HepG2 (cell line): ENCODE measurements at regions of chr6 and their contacts with region 1.

Region 1: GRCh38 chr6:47034919-47035318 is 7.2 kb downstream of the ADGRF1 start:
- DNase-seq: no peak
- ATAC-seq: no peak
- H3K4me3 ChIP-seq: no peak overlapping the region
- H3K27ac ChIP-seq: no peak overlapping the region
- H3K4me1 ChIP-seq: no peaks in the 10 kb centered on the region
- H3K27me3 ChIP-seq: peaks cover 6 to 68% of the 10 kb centered on the region in 2 experiments; a peak in 4 of 5 replicates
- CTCF ChIP-seq: no peak
- EP300 ChIP-seq: no peak
- POLR2A ChIP-seq: no peak
- RAD21 ChIP-seq: no peak

Region 2: GRCh38 chr6:46756469-46757206 is 278.3 kb before region 1 on chr6:
- CTCF ChIA-PET with region 1: no interaction called
- POLR2A ChIA-PET with region 1: no interaction called
- in situ Hi-C with region 1: no loop called
- intact Hi-C with region 1: no loop called
- DNase-seq: no peak
- ATAC-seq: no peak
- H3K4me3 ChIP-seq: no peak overlapping the region
- H3K27ac ChIP-seq: no peak overlapping the region
- H3K4me1 ChIP-seq: no peaks in the 10 kb centered on the region
- H3K27me3 ChIP-seq: peaks cover 0 to 6% of the 10 kb centered on the region in 2 experiments; a peak in 1 of 5 replicates
- CTCF ChIP-seq: no peak
- EP300 ChIP-seq: no peak
- POLR2A ChIP-seq: no peak
- RAD21 ChIP-seq: no peak

Region 3: DNA sequence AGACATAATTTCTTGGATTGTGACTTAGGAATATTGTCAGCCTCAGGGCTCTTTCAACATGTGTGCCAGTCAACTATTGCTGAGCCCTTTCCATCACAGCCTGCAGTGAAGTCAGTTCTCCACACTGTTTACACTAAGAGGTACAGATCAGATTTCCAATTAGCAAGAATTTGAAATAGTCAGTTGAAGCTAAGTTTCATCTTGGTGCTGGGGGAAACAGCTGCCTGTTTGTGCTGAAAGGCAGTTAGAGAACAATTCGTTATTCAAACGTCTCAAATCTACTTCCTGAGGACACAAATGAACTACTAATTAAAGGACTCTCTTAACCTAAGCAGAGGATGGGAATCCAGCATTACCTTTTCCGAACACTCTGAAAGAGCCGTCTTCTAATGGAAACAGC is 18.7 kb before region 1 on chr6:
- CTCF ChIA-PET with region 1: no interaction called
- POLR2A ChIA-PET with region 1: no interaction called
- in situ Hi-C with region 1: no loop called
- intact Hi-C with region 1: loop called (anchors 1 kb)
- DNase-seq: no peak
- ATAC-seq: 0 out of 3 replicates have a peak, but pooled peaks have one; percentile 36
- H3K4me3 ChIP-seq: no peak overlapping the region
- H3K27ac ChIP-seq: no peak overlapping the region
- H3K4me1 ChIP-seq: peaks cover 10% of the 10 kb centered on the region
- H3K27me3 ChIP-seq: peaks cover 0 to 35% of the 10 kb centered on the region in 2 experiments; a peak in 2 of 5 replicates
- CTCF ChIP-seq: no peak
- EP300 ChIP-seq: no peak
- POLR2A ChIP-seq: no peak
- RAD21 ChIP-seq: no peak

Region 4: GRCh38 chr6:47103931-47104330 is 69.0 kb after region 1 on chr6:
- CTCF ChIA-PET with region 1: no interaction called
- POLR2A ChIA-PET with region 1: no interaction called
- in situ Hi-C with region 1: no loop called
- intact Hi-C with region 1: no loop called
- DNase-seq: no peak
- ATAC-seq: no peak
- H3K4me3 ChIP-seq: no peak overlapping the region
- H3K27ac ChIP-seq: no peak overlapping the region
- H3K4me1 ChIP-seq: peaks cover 28% of the 10 kb centered on the region
- H3K27me3 ChIP-seq: no peaks in the 10 kb centered on the region
- CTCF ChIP-seq: no peak
- EP300 ChIP-seq: no peak
- POLR2A ChIP-seq: no peak
- RAD21 ChIP-seq: no peak

Region 5: DNA sequence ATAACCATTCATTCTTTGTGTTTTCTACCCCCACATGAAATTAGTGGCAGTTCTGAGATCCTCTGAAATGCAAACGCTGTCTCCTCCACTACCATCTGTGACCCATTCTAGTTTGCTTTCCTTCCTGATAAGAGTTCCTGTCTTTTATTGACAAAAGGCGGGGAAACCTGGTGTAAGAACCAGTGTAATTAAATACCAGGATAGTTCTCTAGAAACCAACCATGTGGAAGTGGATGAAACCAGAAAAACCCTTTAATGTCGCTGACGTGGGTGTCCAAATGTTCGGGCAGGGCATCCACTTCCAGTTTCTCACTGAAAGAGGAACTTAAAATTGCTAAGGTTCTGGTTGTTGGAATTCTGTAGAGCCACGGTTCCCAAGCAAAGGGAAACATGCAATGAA is 195.7 kb after region 1 on chr6:
- CTCF ChIA-PET with region 1: no interaction called
- POLR2A ChIA-PET with region 1: no interaction called
- in situ Hi-C with region 1: no loop called
- intact Hi-C with region 1: no loop called
- DNase-seq: peak; percentile 32
- ATAC-seq: no peak
- H3K4me3 ChIP-seq: no peak overlapping the region
- H3K27ac ChIP-seq: no peak overlapping the region
- H3K4me1 ChIP-seq: peaks cover 18% of the 10 kb centered on the region
- H3K27me3 ChIP-seq: no peaks in the 10 kb centered on the region
- CTCF ChIP-seq: no peak
- EP300 ChIP-seq: no peak
- POLR2A ChIP-seq: no peak
- RAD21 ChIP-seq: no peak